ENCODE measurements at regions of chr12 and their contacts with region 1.

Region 1: DNA sequence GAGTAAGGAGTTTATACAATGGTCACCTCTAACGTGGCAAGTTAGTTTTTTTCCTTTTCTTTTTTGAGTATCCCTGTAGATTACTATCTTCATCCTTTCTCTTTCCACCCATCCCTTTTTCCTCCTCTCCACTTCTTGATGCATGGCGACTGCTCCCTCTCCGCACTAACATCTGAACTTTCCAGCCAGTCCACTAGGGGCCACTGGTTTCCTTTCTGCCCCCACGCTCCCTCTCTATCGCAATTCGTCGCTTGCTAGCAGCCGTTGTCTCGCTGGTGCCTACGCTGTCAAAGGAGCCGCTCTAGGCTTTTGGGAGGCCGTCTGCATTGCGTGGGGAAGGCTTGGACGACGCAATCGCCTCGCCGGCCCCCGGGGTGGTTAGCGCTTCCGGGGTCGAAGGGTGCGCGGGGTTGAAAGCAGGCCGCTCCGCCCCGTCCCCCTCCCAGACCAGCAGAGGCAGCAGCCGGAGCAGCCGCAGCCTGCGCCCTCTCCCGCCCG is at the start of gene PCBP2:
- DNase-seq: peak; percentile 99
- H3K4me3 Mint-ChIP-seq: peak within 1 kb of the TSS; percentile 99
- H3K27ac Mint-ChIP-seq: peak within 1 kb of the TSS; percentile 100
- H3K4me1 Mint-ChIP-seq: peaks cover 36% of the 10 kb centered on the region
- H3K27me3 Mint-ChIP-seq: no peaks in the 10 kb centered on the region
- total RNA-seq, gene PCBP2: 942 and 960 TPM in 2 replicates

Region 2: GRCh38 chr12:53005986-53006809 is 445.5 kb before region 1 on chr12 and contains the start of gene EIF4B:
- intact Hi-C with region 1: loop called (anchors 5 kb)
- DNase-seq: peak; percentile 100
- H3K4me3 Mint-ChIP-seq: peak within 1 kb of the TSS; percentile 88
- H3K27ac Mint-ChIP-seq: peak within 1 kb of the TSS; percentile 98
- H3K4me1 Mint-ChIP-seq: peaks cover 26% of the 10 kb centered on the region
- H3K27me3 Mint-ChIP-seq: peaks cover 4% of the 10 kb centered on the region
- total RNA-seq, gene EIF4B: 500 and 521 TPM in 2 replicates

Region 3: GRCh38 chr12:53220801-53221202 is 230.9 kb before region 1 on chr12:
- intact Hi-C with region 1: loop called (anchors 5 kb)
- DNase-seq: peak; percentile 96
- H3K4me3 Mint-ChIP-seq: peak overlapping the region; percentile 97
- H3K27ac Mint-ChIP-seq: peak overlapping the region; percentile 90
- H3K4me1 Mint-ChIP-seq: peaks cover 82% of the 10 kb centered on the region
- H3K27me3 Mint-ChIP-seq: peaks cover 1% of the 10 kb centered on the region

Region 4: GRCh38 chr12:53295070-53295890 is 156.4 kb before region 1 on chr12 and contains the start of gene PFDN5:
- intact Hi-C with region 1: loop called (anchors 1 kb)
- DNase-seq: peak; percentile 97
- H3K4me3 Mint-ChIP-seq: peak within 1 kb of the TSS; percentile 98
- H3K27ac Mint-ChIP-seq: peak within 1 kb of the TSS; percentile 90
- H3K4me1 Mint-ChIP-seq: peaks cover 33% of the 10 kb centered on the region
- H3K27me3 Mint-ChIP-seq: no peaks in the 10 kb centered on the region
- total RNA-seq, gene PFDN5: 319 and 342 TPM in 2 replicates

Region 5: DNA sequence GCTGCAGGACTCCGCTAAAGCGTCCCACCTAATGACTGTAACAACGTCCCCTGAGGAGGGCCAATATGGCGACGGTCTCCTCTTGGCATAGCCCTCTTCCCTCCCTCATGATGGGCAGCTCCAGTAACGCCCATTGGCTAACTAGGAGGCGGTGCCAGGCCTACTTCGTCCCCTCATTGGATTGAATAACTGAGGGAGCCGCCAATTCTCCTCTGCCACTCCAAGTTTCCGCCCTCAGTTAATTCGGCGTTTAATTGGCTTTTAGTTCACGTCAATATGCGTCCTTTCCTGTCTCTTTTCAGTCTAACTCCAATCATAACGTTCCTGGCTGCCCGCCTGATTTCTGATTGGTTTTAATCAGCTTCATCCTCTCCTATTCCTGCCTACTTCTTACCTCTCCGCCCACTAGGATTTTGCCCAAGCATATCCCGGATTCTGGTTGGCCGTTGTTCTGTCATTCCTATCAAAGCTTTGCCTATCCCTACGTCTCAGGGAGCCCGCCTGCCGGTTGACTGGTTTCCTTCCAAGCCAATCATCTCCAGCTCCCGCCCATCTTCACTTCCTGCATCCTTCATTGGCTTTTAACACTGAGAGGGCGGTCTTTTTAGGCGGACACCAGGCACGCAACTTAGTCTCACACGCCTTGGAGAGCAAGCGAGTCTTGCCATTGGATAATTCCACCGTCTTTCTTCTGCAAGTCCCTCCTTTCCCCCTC is 72.2 kb before region 1 on chr12:
- intact Hi-C with region 1: loop called (anchors 1 kb)
- DNase-seq: peak; percentile 100
- H3K4me3 Mint-ChIP-seq: no peak overlapping the region
- H3K27ac Mint-ChIP-seq: no peak overlapping the region
- H3K4me1 Mint-ChIP-seq: peaks cover 34% of the 10 kb centered on the region
- H3K27me3 Mint-ChIP-seq: no peaks in the 10 kb centered on the region

Region 6: DNA sequence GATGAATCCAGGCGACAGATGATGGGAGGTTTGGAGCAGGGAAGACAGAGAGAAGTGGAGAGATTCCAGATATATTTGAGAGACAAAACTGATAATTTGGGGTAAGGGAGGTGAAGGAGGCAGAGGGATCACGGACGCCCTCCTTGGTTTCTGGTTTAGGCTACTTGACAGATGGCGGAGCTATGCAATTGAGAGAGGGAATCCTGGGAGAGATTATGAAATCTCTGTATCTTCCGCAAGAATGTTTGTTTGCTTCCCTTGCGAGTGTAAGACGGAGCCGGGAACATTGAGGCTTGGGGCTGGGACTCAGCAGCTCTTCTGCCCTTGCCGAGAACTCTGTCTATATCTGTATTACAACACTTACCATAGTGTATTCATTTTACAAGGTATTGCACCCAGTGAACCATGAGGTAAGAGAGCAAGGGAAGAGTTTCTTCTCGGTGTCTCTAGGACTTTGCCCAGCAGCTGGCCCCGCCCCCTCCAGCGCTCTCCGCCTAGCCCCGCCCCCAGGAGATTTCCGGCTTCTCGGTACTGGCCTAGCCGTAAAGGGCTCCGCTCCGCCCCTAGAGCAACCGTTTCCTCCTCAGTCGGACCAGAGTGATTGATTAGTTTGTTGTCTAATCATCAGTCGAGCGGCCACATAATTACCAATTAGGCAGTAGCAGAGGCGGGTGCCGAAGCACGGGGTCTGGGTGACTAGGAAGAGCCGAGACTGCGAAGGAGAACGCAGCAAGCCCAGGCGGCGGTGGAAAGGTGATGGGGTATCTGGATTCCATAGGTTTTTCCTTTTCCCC is 10.5 kb before region 1 on chr12 and contains the start of gene PRR13:
- intact Hi-C with region 1: loop called (anchors 1 kb)
- DNase-seq: peak; percentile 99
- H3K4me3 Mint-ChIP-seq: peak within 1 kb of the TSS; percentile 97
- H3K27ac Mint-ChIP-seq: peak within 1 kb of the TSS; percentile 96
- H3K4me1 Mint-ChIP-seq: peaks cover 30% of the 10 kb centered on the region
- H3K27me3 Mint-ChIP-seq: no peaks in the 10 kb centered on the region
- total RNA-seq, gene PRR13: 201 and 211 TPM in 2 replicates

Region 7: GRCh38 chr12:53489242-53489859 is 37.6 kb after region 1 on chr12:
- intact Hi-C with region 1: no loop called
- DNase-seq: no peak
- H3K4me3 Mint-ChIP-seq: no peak overlapping the region
- H3K27ac Mint-ChIP-seq: peak overlapping the region; percentile 11
- H3K4me1 Mint-ChIP-seq: peaks cover 21% of the 10 kb centered on the region
- H3K27me3 Mint-ChIP-seq: no peaks in the 10 kb centered on the region

Region 8: DNA sequence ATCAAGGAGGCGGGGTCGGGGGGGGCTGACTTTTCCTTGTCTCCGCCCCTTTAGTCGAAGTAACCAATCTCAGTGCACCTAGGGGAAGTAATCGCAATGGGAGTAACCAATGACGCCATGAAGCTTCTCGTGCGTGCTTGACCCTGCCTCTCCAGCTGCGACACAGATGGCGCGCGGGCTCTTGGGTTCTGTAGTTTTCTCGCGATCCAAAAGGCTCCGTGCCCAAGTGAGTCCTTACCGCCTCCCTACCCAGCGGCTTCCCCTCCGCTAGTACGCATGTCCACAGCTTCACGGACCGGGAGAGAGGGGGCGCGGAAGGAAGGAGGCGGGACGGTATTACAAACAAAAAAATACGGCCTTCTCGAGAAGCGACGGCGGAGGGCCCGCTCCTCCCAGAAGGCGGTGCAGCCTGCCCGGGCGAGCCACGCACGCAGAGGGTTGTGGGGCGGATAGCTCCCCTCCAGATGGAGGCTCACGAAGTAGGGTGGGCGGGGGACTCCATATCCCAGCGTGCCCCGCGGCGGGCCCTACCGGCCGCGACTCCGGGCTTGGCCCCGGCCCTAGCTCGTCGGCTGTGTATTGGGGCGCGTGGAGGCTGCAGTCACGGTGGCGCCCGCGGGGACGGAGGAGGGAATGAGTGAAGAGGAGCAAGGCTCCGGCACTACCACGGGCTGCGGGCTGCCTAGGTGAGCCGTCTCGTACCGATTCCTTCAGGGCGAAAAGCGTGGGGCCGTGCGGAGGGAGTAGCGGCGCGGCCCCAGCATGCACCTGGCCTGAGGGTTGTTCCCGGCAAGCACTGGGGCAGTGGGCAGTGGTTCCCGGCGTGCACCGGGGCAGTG is 49.3 kb after region 1 on chr12 and contains the start of gene TARBP2:
- intact Hi-C with region 1: loop called (anchors 2 kb)
- DNase-seq: peak; percentile 98
- H3K4me3 Mint-ChIP-seq: peak within 1 kb of the TSS; percentile 93
- H3K27ac Mint-ChIP-seq: peak within 1 kb of the TSS; percentile 97
- H3K4me1 Mint-ChIP-seq: peaks cover 35% of the 10 kb centered on the region
- H3K27me3 Mint-ChIP-seq: no peaks in the 10 kb centered on the region
- total RNA-seq, gene TARBP2: 49.7 and 52.2 TPM in 2 replicates

Measured in activated CD4-positive, alpha-beta T cell treated with anti-CD3 and anti-CD28 coated beads, Interleukin-2, amount 10 ng/mL, durations not matched to agents 24 days and 14 days (primary cell).